Transverse colon (tissue), 4 donors: ENCODE measurements at regions of chr15 and their contacts with region 1.

Region 1: DNA sequence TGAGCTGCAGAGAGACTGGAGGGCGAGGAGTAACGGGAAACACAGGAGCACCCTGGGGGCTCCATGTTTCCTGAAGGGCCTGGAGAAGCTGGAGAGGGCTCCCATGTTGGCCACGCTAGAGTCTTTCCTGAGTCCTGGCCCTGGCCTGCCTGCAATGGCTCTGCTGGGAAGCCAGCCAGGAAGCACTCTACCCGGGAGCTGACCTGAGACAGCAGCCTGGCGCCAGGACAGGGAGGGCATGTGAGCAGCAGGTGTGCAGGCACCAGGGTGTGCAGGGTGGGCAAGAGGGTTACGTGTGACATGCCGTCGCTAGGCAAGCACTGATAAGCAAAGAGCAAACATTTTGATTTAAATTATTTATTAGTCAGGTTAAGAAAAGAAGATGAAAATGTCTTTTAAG is 301.4 kb downstream of the OCA2 start:
- DNase-seq: no peak
- H3K4me3 ChIP-seq: no peak overlapping the region
- H3K27ac ChIP-seq: no peak overlapping the region
- H3K4me1 ChIP-seq: no peaks in the 10 kb centered on the region
- H3K27me3 ChIP-seq: no peaks in the 10 kb centered on the region
- CTCF ChIP-seq: no peak
- EP300 ChIP-seq: no peak
- POLR2A ChIP-seq: no peak

Region 2: GRCh38 chr15:27897481-27897880 is 99.7 kb after region 1 on chr15:
- in situ Hi-C with region 1: loop called in 1 of 4 experiments (anchors 25 kb)
- intact Hi-C with region 1: no loop called
- DNase-seq: no peak
- H3K4me3 ChIP-seq: no peak overlapping the region
- H3K27ac ChIP-seq: no peak overlapping the region
- H3K4me1 ChIP-seq: no peaks in the 10 kb centered on the region
- H3K27me3 ChIP-seq: no peaks in the 10 kb centered on the region
- CTCF ChIP-seq: no peak
- EP300 ChIP-seq: no peak
- POLR2A ChIP-seq: no peak